ENCODE measurements at regions of chr17 and their contacts with region 1.

Region 1: DNA sequence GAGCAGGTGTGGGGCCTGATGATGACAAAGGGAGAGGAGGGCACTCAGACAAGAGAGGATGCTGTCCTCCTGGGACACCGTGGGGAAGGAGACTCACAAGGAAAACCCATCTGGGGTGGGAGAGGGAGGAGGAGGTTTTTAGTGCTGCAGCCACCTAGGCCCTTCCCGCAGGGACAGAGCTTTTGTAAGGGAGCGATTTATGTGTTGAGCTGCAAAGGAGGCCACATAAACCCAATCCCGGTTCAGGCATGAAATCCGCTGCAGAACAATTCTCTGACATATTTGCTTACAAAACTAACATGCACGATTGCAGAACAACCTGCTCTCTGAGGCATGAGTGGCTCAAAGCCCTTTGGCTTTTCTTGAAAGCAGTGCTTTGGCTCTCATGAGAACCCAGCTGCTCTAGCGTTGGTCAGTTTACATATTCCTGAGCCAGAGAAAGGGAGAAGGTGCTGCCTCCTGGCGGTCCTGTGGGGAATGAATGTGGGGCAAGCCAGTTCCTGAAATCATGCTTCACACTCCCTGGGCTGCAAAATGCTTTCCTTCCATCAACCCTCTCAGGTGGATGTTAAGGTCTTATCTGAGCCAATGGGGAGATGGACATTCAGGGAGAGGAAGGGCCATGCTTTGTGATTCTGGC is 122.4 kb upstream of the NLRP1 start:
- DNase-seq: peak; percentile 42
- ATAC-seq: no peak
- H3K4me3 Mint-ChIP-seq: no peak overlapping the region
- H3K27ac Mint-ChIP-seq: no peak overlapping the region
- H3K4me1 Mint-ChIP-seq: no peaks in the 10 kb centered on the region
- H3K27me3 Mint-ChIP-seq: peaks cover 25% of the 10 kb centered on the region
- CTCF ChIP-seq: no peak

Region 2: DNA sequence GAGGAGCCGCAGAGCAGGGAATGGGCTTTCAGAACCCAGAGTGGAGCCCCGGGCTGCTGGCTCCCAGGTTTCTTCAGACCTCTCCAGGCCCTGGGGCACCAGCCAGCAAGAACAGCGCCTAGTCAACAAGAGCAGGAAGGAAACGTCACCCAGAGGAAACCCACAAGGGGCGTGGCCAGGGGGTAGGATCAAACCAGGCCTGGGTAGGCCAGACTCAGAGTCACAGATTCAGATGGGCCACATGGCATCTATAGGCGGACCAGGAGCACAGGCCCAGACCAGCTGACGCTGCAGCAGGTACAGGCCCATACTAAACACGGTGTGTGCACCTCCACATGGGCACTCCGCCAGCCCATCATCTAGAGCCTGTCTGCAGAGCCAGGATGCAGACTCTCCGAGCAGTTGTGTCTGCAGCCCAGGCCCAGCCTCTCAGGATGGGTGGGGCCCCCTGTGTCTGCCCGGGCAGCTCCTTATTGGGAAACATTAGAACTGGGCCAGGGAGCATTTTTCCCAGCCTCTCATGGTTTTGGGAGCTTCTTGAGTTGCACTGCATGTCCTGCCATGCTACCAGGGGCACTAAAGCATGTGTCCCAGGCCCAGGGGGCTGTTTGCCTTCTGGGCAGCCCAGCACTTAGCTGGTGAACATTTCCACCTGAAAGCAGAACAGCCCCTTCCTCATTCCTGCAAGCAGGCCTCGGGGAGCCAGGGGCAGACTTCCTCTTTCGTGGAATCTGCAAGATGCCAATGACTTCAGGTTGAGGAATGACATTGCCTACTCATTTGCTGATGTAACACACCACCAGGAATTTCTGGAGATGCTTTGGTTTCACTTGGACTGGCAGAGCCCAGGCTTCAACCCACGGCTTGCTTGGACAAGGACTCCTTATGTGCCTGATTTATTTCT is 122.1 kb before region 1 on chr17 and contains the start of gene NLRP1:
- CTCF ChIA-PET with region 1: interaction called, 20 read pairs
- POLR2A ChIA-PET with region 1: no interaction called
- intact Hi-C with region 1: no loop called
- DNase-seq: peak; percentile 78
- ATAC-seq: peak; percentile 96
- H3K4me3 Mint-ChIP-seq: peak within 1 kb of the TSS; percentile 92
- H3K27ac Mint-ChIP-seq: peak within 1 kb of the TSS; percentile 93
- H3K4me1 Mint-ChIP-seq: peaks cover 66% of the 10 kb centered on the region
- H3K27me3 Mint-ChIP-seq: no peaks in the 10 kb centered on the region
- CTCF ChIP-seq: no peak
- total RNA-seq, gene NLRP1: 35.5 and 40.4 TPM in 2 replicates

Region 3: DNA sequence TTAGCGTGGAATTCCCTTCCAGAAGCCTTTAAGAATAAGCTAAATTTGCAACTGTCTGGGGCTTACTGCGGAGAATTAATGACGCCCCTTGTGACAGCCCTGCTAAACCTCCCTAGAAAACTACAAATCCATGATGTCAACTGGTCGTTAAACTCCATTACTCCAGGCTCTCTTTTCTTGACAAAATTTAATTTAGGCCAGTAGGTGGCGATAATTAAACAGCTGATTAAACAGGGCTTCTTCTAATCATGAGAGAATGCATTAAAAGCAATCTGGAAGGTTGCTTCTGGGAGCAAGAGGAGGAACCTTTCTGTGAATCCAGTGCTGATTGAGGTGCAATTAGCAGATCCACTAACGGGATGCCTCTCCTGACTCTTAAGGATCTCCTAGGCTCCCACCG is 114.3 kb before region 1 on chr17:
- CTCF ChIA-PET with region 1: interaction called, 20 read pairs
- POLR2A ChIA-PET with region 1: no interaction called
- intact Hi-C with region 1: loop called (anchors 1 kb)
- DNase-seq: no peak
- ATAC-seq: no peak
- H3K4me3 Mint-ChIP-seq: no peak overlapping the region
- H3K27ac Mint-ChIP-seq: no peak overlapping the region
- H3K4me1 Mint-ChIP-seq: peaks cover 1% of the 10 kb centered on the region
- H3K27me3 Mint-ChIP-seq: peaks cover 30% of the 10 kb centered on the region
- CTCF ChIP-seq: no peak

Measured in activated B cell treated with CpG ODN at 0.5 μM for 24 hours (primary cell).